ENCODE measurements at regions of chr9 and their contacts with region 1.

Region 1: GRCh38 chr9:13351778-13352386 is 72.4 kb upstream of the MPDZ start:
- DNase-seq: no peak
- H3K4me3 ChIP-seq: no peak overlapping the region
- H3K27ac ChIP-seq: no peak overlapping the region
- H3K4me1 ChIP-seq: no peaks in the 10 kb centered on the region
- H3K27me3 ChIP-seq: no peaks in the 10 kb centered on the region
- CTCF ChIP-seq: peak; percentile 57 to 71 (median 67)
- EP300 ChIP-seq: no peak
- POLR2A ChIP-seq: no peak

Region 2: GRCh38 chr9:13165236-13165945 is 186.5 kb before region 1 on chr9:
- intact Hi-C with region 1: no loop called
- DNase-seq: no peak
- H3K4me3 ChIP-seq: no peak overlapping the region
- H3K27ac ChIP-seq: no peak overlapping the region
- H3K4me1 ChIP-seq: no peaks in the 10 kb centered on the region
- H3K27me3 ChIP-seq: no peaks in the 10 kb centered on the region
- CTCF ChIP-seq: no peak
- EP300 ChIP-seq: no peak
- POLR2A ChIP-seq: no peak

Region 3: DNA sequence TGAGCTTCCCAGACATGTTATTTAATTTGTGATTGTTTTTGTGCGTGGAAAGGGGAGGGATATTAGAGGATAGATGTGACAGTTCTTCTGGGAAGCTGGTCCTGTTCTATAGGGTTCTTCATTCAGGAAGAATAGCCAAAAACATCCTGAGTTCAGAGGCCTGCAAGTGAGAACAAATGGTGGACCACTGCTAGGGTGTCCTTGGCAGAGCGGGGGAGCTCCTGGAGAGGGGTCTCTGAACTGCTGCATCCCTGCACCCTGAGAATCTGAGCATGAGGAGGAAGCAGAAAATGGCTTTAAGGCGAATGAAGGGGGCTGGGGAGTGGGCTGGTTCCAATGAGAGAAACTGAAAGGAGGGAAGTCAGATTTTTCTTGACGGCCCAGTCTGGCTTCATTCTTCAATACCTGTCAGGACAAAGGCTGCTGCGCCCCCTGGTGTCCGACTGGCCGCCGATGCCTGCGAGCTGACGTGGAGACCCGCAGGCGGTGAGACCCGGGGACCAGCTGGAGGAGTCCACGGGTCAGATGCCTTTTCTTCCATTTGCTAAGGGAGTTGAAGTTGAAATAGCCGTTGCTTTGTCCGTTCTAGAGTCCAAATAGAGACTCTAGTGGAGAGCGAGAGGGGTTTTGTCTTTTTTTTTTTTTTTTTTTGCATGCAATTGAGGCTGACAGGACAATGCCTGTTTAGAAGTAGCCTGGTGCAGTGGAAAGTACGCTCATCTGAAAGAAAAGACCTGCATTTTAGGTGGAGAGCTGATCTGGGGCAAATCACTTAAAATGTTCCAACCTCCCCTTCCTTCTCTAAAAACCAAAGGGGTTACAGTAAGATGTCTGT is 1001.6 kb after region 1 on chr9:
- intact Hi-C with region 1: loop called (anchors 5 kb)
- DNase-seq: peak; percentile 98
- H3K4me3 ChIP-seq: peak overlapping the region; percentile 15 to 44 (median 33)
- H3K27ac ChIP-seq: peak overlapping the region; percentile 50 to 67 (median 62)
- H3K4me1 ChIP-seq: peaks cover 43 to 62% (median 52%) of the 10 kb centered on the region in 4 donors
- H3K27me3 ChIP-seq: peaks cover 0 to 19% (median 10%) of the 10 kb centered on the region in 4 donors
- CTCF ChIP-seq: peak; percentile 88 to 96 (median 90)
- EP300 ChIP-seq: no peak
- POLR2A ChIP-seq: no peak

Region 4: GRCh38 chr9:14433351-14434157 is 1081.7 kb after region 1 on chr9:
- intact Hi-C with region 1: loop called (anchors 5 kb)
- DNase-seq: no peak
- H3K4me3 ChIP-seq: peak overlapping the region in 2 of 4 donors; percentile 7 to 29
- H3K27ac ChIP-seq: no peak overlapping the region
- H3K4me1 ChIP-seq: peaks cover 10 to 18% (median 14%) of the 10 kb centered on the region in 4 donors
- H3K27me3 ChIP-seq: no peaks in the 10 kb centered on the region
- CTCF ChIP-seq: peak; percentile 32 to 44 (median 34)
- EP300 ChIP-seq: no peak
- POLR2A ChIP-seq: no peak

Measured in esophagus muscularis mucosa (tissue), 4 donors.